Prostate gland (tissue), 2 donors: ENCODE measurements at regions of chr7 and their contacts with region 1.

Region 1: DNA sequence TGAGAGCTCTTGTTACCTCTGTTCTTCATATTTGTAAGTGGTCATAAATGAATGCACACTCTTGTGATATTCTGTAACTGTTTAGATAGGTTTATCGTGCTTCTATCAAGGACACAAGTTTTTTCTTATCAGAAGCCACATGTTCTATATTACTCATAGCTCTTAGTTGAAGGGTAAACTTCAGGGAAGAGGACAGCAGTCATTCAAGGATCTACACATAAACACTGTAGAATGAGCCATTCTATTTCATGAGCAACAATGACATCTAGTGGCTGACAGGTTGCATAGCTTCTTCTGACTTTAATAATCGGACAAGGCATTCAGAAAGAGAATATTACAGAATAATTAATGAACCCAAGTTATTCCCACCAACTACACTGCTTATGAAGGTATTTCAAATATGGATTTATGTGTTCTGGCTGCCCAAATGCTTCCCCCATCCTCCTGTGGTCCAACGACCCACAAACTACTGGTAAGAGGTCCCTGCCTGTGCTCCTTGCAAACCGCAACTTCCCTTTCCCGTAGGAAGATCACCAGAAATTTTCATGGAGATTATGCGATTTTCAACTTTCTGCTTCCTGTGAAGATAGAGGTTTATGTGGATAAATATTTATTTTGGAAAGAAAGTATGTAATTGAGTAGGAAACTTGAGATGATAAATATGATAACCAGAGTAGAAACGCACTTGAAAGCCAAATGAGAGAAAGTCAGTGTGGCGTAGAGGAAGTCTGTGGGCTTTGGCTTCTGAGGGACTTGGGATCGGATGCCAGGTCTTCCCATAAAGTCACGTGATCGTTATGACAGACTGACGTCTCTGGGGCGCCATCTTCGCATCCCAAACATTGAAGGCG is 16.8 kb upstream of the ABCB5 start:
- DNase-seq: no peak
- H3K4me3 ChIP-seq: no peak overlapping the region
- H3K27ac ChIP-seq: no peak overlapping the region
- H3K4me1 ChIP-seq: no peaks in the 10 kb centered on the region
- H3K27me3 ChIP-seq: no peaks in the 10 kb centered on the region
- CTCF ChIP-seq: peak; percentile 74 to 90 (median 80)
- POLR2A ChIP-seq: no peak

Region 2: DNA sequence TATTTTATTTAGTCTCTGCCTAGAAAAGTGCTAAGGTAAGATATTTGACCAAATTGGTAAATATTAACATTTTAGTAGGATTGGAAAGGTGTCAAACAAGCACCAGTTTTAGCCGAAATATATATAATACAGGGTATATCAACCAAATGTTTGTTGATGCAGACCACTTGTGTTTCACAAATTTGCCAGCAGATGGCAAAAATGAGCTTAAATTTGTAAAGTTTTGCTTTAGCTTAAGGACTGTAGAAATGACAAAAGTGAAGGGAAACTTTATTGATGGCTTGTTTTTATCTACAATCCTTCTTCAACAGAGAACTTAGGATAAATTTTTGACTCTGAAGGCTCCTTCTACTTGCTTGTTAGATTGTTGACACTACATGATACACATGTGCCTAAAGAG is 885.0 kb before region 1 on chr7:
- intact Hi-C with region 1: loop called (anchors 2 kb)
- DNase-seq: no peak
- H3K4me3 ChIP-seq: no peak overlapping the region
- H3K27ac ChIP-seq: no peak overlapping the region
- H3K4me1 ChIP-seq: no peaks in the 10 kb centered on the region
- H3K27me3 ChIP-seq: no peaks in the 10 kb centered on the region
- CTCF ChIP-seq: peak in 3 of 4 experiments; percentile 21 to 65 (median 49)
- POLR2A ChIP-seq: no peak

Region 3: DNA sequence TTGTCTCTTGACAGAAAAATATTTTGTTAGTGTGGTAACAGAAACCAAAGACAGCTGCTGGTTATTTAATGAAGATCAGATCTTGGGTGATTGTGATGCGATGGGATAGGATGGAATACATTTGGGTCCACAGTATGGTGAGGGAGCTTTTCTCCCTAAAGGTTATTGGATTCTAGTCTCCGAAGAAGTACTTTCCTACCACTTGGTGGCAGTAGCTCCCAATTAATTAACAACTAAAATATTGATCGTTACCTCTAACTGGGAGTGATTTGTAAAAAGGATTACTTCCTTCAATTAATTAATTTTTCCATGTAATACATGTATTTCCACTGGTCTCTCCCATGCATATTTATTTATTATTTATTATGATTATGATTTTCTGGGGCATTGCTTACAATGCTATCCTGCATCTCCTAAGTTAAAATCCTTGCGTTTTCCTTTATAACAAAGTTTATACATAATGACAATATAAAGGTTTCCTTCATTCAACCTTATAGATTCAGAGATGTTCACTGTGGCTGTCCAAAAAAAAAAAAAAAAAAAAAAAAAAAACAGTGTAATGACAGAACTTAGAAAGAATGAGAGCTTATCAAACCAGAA is 850.8 kb before region 1 on chr7:
- intact Hi-C with region 1: loop called (anchors 5 kb)
- DNase-seq: no peak
- H3K4me3 ChIP-seq: no peak overlapping the region
- H3K27ac ChIP-seq: no peak overlapping the region
- H3K4me1 ChIP-seq: no peaks in the 10 kb centered on the region
- H3K27me3 ChIP-seq: no peaks in the 10 kb centered on the region
- CTCF ChIP-seq: peak in 3 of 4 experiments; percentile 27 to 56 (median 51)
- POLR2A ChIP-seq: no peak

Region 4: GRCh38 chr7:19982841-19983835 is 615.5 kb before region 1 on chr7:
- intact Hi-C with region 1: loop called (anchors 10 kb)
- DNase-seq: peak; percentile 9
- H3K4me3 ChIP-seq: no peak overlapping the region
- H3K27ac ChIP-seq: no peak overlapping the region
- H3K4me1 ChIP-seq: no peaks in the 10 kb centered on the region
- H3K27me3 ChIP-seq: no peaks in the 10 kb centered on the region
- CTCF ChIP-seq: peak in 2 of 4 experiments; percentile 23 to 28
- POLR2A ChIP-seq: no peak

Region 5: GRCh38 chr7:20172736-20173334 is 425.8 kb before region 1 on chr7:
- intact Hi-C with region 1: loop called (anchors 5 kb)
- DNase-seq: peak; percentile 38
- H3K4me3 ChIP-seq: no peak overlapping the region
- H3K27ac ChIP-seq: no peak overlapping the region
- H3K4me1 ChIP-seq: no peaks in the 10 kb centered on the region
- H3K27me3 ChIP-seq: no peaks in the 10 kb centered on the region
- CTCF ChIP-seq: peak in 3 of 4 experiments; percentile 35 to 52 (median 47)
- POLR2A ChIP-seq: no peak

Region 6: DNA sequence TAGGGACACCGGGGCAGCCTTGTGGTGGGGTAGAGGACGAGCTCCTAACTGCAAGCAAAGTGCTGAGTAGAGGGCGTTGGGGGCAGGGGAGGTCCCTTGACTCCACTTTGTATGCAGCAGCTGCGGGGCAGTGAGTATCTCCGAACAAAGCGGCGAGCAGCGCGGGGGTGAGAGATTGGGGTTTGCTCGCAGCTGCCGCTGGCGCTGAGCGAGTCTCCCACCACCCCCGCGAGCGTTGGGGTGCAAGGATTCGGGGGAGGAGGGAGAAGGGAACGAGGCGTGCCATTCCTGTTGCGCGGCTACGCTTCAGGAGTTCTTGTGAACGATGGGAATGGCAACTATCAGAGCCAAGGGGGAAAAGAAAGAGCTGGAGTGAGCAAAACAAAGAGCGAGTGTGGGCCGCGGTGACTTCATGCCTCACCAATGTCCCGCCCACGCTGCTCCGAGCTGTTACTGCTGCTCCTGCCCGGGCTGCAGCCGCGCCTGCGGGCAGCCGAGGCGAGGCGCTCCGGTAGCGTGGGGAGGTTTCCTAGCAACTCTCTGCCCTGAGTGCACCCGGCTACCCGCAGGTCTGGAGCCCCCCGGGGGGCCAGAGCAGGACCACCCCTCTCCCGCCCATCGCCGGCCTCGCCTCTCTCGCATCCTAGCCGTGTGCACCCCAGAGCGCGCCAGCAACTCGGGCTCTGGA is 268.3 kb before region 1 on chr7 and contains the start of gene ITGB8:
- intact Hi-C with region 1: loop called (anchors 2 kb)
- DNase-seq: peak; percentile 86
- H3K4me3 ChIP-seq: peak within 1 kb of the TSS; percentile 59 to 72
- H3K27ac ChIP-seq: peak within 1 kb of the TSS; percentile 86 to 88
- H3K4me1 ChIP-seq: no peaks in the 10 kb centered on the region
- H3K27me3 ChIP-seq: no peaks in the 10 kb centered on the region
- CTCF ChIP-seq: no peak
- POLR2A ChIP-seq: peak; percentile 43
- total RNA-seq, gene ITGB8: 50.3 to 99.5 TPM

Region 7: GRCh38 chr7:20440472-20441105 is 158.1 kb before region 1 on chr7:
- intact Hi-C with region 1: loop called (anchors 10 kb)
- DNase-seq: no peak
- H3K4me3 ChIP-seq: no peak overlapping the region
- H3K27ac ChIP-seq: no peak overlapping the region
- H3K4me1 ChIP-seq: no peaks in the 10 kb centered on the region
- H3K27me3 ChIP-seq: no peaks in the 10 kb centered on the region
- CTCF ChIP-seq: peak in 1 of 4 experiments; percentile 27
- POLR2A ChIP-seq: no peak

Region 8: GRCh38 chr7:21603972-21604749 is 1005.5 kb after region 1 on chr7:
- intact Hi-C with region 1: no loop called
- DNase-seq: no peak
- H3K4me3 ChIP-seq: no peak overlapping the region
- H3K27ac ChIP-seq: no peak overlapping the region
- H3K4me1 ChIP-seq: no peaks in the 10 kb centered on the region
- H3K27me3 ChIP-seq: no peaks in the 10 kb centered on the region
- CTCF ChIP-seq: no peak
- POLR2A ChIP-seq: no peak